CD4-positive, alpha-beta memory T cell (primary cell): ENCODE measurements at regions of chr4 and their contacts with region 1.

Region 1: DNA sequence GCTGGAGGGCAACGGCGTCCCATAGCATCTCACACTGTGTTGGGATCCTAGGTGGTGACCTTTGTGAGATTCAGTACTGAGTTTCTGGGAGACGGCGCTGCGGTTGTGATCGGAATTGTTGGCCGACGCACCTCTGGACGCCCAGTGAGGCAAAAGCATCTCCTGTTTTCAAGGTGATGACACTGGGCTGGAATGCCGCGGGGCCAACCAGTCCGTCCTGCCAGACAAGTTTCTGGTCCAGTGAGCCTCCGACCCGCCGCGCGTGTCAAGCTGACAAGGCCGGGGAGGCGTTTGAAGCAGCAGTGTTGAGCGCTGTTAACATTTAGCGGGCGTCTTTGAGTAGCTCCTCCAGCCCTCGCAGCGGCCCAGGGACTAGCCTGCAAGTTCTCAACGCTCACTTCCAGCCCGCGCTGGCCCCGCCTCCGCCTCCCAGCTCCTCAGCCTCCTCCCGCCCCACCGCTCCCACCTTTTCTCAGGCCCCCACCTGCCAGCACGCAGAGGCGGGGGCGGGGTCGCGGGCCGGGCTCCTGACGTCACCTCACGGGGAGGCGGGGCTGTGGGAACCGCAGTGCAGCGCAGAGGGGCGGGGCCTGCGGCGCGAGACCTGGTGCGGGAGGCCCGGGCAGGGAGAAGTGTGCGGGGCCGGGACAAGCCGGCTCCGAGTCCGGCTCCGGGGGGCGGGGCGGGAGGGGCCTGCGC is 476 bp upstream of the CDS1 start:
- DNase-seq: peak; percentile 88 to 92 (median 90)
- H3K4me3 ChIP-seq: peak overlapping the region in 1 of 2 donors; percentile 51
- H3K4me3 Mint-ChIP-seq: peak overlapping the region; percentile 66 to 87 (median 82)
- H3K27ac ChIP-seq: peak overlapping the region; percentile 31
- H3K27ac Mint-ChIP-seq: peak overlapping the region; percentile 62 to 86 (median 74)
- H3K4me1 ChIP-seq: peaks cover 19% of the 10 kb centered on the region
- H3K4me1 Mint-ChIP-seq: peaks cover 9 to 18% (median 15%) of the 10 kb centered on the region in 4 donors
- H3K27me3 ChIP-seq: peaks cover 8% of the 10 kb centered on the region
- H3K27me3 Mint-ChIP-seq: peaks cover 16 to 32% of the 10 kb centered on the region in 2 donors

Region 2: DNA sequence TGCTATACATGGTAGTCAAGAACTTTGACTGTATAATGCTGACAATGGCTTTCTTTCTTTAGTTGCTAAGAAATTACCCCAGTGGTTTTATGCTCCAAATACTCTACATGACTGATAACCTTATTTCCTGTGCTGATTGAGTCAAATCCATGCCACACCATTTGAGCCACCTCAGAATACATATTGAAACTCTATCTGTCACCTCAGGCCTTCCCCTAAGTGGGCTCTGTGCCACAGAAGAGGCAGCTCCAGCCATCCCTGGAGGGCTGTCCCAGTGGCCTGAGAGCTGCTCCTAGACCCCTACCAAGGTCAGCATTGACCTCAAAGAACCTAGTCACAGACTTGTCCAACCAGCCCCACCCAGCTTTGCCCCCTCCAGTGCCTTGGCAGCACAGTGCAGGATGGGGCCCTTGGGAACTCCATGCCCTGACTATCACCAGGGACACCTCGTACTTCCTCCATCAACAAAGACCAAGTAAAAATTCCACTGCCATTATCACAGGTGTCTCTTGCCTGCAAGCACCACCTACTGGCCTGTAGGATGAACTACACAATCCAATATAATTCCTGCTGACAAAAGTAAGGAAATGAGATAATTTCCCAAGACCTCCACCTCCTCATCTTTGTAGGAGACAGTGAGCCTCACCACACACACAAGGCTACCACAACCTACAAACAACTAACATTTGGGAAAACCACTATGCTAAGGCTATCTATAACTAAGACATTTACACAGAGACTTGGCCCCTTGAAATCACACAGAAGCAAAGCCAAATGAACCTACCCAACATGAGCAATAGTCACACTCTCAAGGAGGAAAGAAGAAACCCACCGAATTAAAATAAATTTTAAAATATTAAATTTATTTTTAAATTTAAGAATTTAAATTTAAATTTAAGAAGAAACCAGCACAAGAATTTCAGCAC is 323.3 kb before region 1 on chr4:
- CTCF ChIA-PET with region 1: no interaction called
- POLR2A ChIA-PET with region 1: no interaction called
- intact Hi-C with region 1: no loop called
- DNase-seq: no peak
- H3K4me3 ChIP-seq: no peak overlapping the region
- H3K4me3 Mint-ChIP-seq: no peak overlapping the region
- H3K27ac ChIP-seq: no peak overlapping the region
- H3K27ac Mint-ChIP-seq: no peak overlapping the region
- H3K4me1 ChIP-seq: no peaks in the 10 kb centered on the region
- H3K4me1 Mint-ChIP-seq: no peaks in the 10 kb centered on the region
- H3K27me3 ChIP-seq: no peaks in the 10 kb centered on the region
- H3K27me3 Mint-ChIP-seq: no peaks in the 10 kb centered on the region

Region 3: GRCh38 chr4:84971319-84971932 is 389.0 kb after region 1 on chr4:
- CTCF ChIA-PET with region 1: interaction called, 10 read pairs
- POLR2A ChIA-PET with region 1: no interaction called
- intact Hi-C with region 1: no loop called
- DNase-seq: peak in 1 of 5 donors; percentile 15
- H3K4me3 ChIP-seq: no peak overlapping the region
- H3K4me3 Mint-ChIP-seq: no peak overlapping the region
- H3K27ac ChIP-seq: no peak overlapping the region
- H3K27ac Mint-ChIP-seq: no peak overlapping the region
- H3K4me1 ChIP-seq: no peaks in the 10 kb centered on the region
- H3K4me1 Mint-ChIP-seq: peaks cover 6 to 11% (median 9%) of the 10 kb centered on the region in 4 donors
- H3K27me3 ChIP-seq: no peaks in the 10 kb centered on the region
- H3K27me3 Mint-ChIP-seq: peaks cover 15 to 19% of the 10 kb centered on the region in 2 donors